HepG2 (cell line): ENCODE measurements at regions of chr7 and their contacts with region 1.

Region 1: DNA sequence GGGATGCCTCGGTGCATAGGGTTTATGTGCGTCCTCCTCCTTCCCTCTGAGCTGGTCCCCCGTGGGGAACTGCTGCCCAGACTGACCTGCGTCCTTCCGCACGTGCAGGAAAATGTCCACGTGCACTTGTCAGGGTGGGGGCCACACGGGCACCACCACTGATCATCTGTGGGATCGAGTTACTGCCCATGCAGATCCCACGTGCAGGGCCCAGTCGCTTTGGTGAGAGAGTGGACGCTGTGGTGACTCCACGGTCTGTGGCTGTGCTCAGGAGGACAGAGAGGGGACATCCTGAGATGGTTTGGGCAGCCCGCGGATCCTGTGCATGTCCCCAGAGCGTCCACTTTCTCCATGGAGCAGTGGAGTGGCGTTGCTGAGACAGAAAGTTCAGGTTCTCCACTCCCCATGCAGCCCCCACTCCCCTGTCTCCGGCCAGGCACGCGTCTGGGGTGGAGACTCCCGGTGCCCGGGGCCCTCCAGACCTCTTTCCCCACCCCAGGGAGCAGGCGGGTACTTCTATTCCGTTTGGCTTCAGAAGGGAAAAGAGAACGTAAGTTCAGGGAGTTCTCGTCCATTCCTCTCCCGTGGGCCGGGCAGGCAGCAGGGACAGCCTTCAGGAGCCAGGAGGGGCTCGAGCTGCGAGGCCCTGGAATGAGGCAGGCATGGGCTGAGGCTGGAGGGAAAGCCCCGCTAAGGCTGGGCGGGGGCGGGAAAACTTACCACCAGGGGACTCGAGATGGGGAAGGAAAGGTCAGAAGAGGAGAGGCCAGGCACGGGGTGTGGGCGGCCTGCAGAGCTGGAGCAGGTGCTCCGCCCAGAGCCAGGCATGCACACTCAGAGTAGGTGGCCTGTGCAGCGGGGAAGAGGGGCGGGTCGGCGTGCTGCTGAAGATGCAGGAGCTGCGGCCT is 59.9 kb downstream of the EGFR start:
- DNase-seq: peak; percentile 77
- ATAC-seq: peak; percentile 91
- H3K4me3 ChIP-seq: peak overlapping the region; percentile 53 to 77 (median 56)
- H3K27ac ChIP-seq: peak overlapping the region; percentile 94
- H3K4me1 ChIP-seq: peaks cover 89% of the 10 kb centered on the region
- H3K27me3 ChIP-seq: no peaks in the 10 kb centered on the region
- CTCF ChIP-seq: peak; percentile 74
- EP300 ChIP-seq: peak in 1 of 2 experiments; percentile 47; a peak in 2 of 4 replicates
- POLR2A ChIP-seq: peak; percentile 27 to 48; a peak in 2 of 4 replicates
- RAD21 ChIP-seq: no peak

Region 2: DNA sequence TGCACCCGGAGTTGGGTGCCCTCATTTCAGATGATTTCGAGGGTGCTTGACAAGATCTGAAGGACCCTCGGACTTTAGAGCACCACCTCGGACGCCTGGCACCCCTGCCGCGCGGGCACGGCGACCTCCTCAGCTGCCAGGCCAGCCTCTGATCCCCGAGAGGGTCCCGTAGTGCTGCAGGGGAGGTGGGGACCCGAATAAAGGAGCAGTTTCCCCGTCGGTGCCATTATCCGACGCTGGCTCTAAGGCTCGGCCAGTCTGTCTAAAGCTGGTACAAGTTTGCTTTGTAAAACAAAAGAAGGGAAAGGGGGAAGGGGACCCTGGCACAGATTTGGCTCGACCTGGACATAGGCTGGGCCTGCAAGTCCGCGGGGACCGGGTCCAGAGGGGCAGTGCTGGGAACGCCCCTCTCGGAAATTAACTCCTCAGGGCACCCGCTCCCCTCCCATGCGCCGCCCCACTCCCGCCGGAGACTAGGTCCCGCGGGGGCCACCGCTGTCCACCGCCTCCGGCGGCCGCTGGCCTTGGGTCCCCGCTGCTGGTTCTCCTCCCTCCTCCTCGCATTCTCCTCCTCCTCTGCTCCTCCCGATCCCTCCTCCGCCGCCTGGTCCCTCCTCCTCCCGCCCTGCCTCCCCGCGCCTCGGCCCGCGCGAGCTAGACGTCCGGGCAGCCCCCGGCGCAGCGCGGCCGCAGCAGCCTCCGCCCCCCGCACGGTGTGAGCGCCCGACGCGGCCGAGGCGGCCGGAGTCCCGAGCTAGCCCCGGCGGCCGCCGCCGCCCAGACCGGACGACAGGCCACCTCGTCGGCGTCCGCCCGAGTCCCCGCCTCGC is 60.1 kb before region 1 on chr7 and contains the start of gene EGFR:
- CTCF ChIA-PET with region 1: no interaction called
- POLR2A ChIA-PET with region 1: interaction called, 5 read pairs
- in situ Hi-C with region 1: no loop called
- intact Hi-C with region 1: loop called (anchors 2 kb)
- DNase-seq: no peak
- ATAC-seq: peak; percentile 78
- H3K4me3 ChIP-seq: peak within 1 kb of the TSS; percentile 63 to 74 (median 64)
- H3K27ac ChIP-seq: no peak within 1 kb of the TSS
- H3K4me1 ChIP-seq: peaks cover 53% of the 10 kb centered on the region
- H3K27me3 ChIP-seq: peaks cover 7 to 32% of the 10 kb centered on the region in 2 experiments
- CTCF ChIP-seq: no peak; the same call in 1 of the 2 replicates
- EP300 ChIP-seq: no peak
- POLR2A ChIP-seq: no peak
- RAD21 ChIP-seq: 0 out of 2 replicates have a peak, but pooled peaks have one; percentile 22
- total RNA-seq, gene EGFR: 7.0 TPM in 2 replicates

Region 3: DNA sequence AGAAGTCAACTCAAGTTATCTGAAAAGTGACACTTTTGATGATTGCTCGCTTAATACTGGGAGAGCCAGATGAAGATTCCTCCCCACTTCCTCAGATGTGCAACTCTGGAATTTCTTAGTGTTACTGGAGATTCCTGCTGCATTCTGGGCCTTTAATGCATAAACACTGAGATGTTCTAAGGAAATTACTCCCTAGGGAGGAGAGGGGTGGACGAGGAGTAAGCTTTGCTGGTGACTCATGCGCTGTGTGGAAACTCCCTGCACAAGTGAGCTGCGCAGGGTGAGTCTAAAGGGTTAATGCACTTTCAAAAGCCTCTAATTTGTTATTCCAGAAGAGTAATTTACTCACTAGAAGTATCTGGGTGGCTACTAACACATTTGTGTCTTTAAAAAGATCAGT is 13.6 kb before region 1 on chr7:
- CTCF ChIA-PET with region 1: no interaction called
- POLR2A ChIA-PET with region 1: interaction called, 35 read pairs
- in situ Hi-C with region 1: no loop called
- intact Hi-C with region 1: loop called (anchors 1 kb)
- DNase-seq: no peak
- ATAC-seq: no peak
- H3K4me3 ChIP-seq: no peak overlapping the region
- H3K27ac ChIP-seq: peak overlapping the region; percentile 69
- H3K4me1 ChIP-seq: peaks cover 60% of the 10 kb centered on the region
- H3K27me3 ChIP-seq: no peaks in the 10 kb centered on the region
- CTCF ChIP-seq: no peak
- EP300 ChIP-seq: no peak
- POLR2A ChIP-seq: no peak
- RAD21 ChIP-seq: no peak

Region 4: DNA sequence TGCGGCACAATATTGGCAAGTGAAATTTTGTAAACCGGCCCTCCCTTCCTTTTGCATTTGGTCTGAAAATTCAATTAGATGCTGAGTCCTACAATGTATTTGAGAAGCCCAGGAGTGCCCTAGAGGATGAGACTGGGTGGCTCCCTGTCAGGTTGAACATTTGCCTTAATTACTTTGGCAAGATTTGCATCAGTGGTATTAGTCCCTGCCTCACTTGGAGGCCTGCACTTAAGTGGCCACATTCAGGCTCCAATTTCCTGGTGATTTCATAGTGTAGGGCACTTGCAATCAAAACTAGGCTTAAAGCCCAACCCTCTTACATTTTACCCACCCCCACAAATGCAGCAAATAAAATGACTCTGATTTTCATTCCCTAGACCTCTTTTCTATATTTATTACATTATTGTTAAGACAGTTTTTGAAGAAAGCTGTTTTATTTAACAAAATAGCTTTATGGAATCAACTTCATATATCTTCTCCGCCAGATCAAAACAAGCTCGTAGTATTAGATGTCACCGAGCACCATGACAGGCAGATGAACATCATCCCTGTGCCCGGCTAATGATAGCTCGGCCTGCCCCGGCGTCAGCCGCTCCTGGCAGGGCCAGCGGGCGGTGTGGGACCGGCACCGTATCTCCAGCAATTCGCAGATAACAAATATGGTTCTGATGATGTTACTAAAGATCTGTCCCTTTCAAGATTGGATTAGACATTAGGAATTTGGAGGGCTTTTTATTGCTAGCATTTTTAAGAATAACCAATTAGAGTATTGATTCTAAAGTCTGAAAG is 13.7 kb after region 1 on chr7:
- CTCF ChIA-PET with region 1: no interaction called
- POLR2A ChIA-PET with region 1: interaction called, 46 read pairs
- in situ Hi-C with region 1: no loop called
- intact Hi-C with region 1: no loop called
- DNase-seq: no peak
- ATAC-seq: no peak
- H3K4me3 ChIP-seq: no peak overlapping the region
- H3K27ac ChIP-seq: peak overlapping the region; percentile 58
- H3K4me1 ChIP-seq: peaks cover 54% of the 10 kb centered on the region
- H3K27me3 ChIP-seq: 0 out of 5 replicates have a peak, but pooled peaks cover 0 to 2% of the 10 kb centered on the region in 2 experiments
- CTCF ChIP-seq: no peak
- EP300 ChIP-seq: no peak
- POLR2A ChIP-seq: no peak
- RAD21 ChIP-seq: no peak

Region 5: GRCh38 chr7:55158541-55159382 is 80.0 kb after region 1 on chr7:
- CTCF ChIA-PET with region 1: no interaction called
- POLR2A ChIA-PET with region 1: no interaction called
- in situ Hi-C with region 1: no loop called
- intact Hi-C with region 1: no loop called
- DNase-seq: no peak
- ATAC-seq: no peak
- H3K4me3 ChIP-seq: no peak overlapping the region
- H3K27ac ChIP-seq: no peak overlapping the region
- H3K4me1 ChIP-seq: no peaks in the 10 kb centered on the region
- H3K27me3 ChIP-seq: no peaks in the 10 kb centered on the region
- CTCF ChIP-seq: no peak
- EP300 ChIP-seq: no peak
- POLR2A ChIP-seq: no peak
- RAD21 ChIP-seq: no peak

Region 6: GRCh38 chr7:55185941-55186609 is 107.4 kb after region 1 on chr7:
- CTCF ChIA-PET with region 1: no interaction called
- POLR2A ChIA-PET with region 1: interaction called, 21 read pairs
- in situ Hi-C with region 1: no loop called
- intact Hi-C with region 1: no loop called
- DNase-seq: peak; percentile 78
- ATAC-seq: peak; percentile 75
- H3K4me3 ChIP-seq: peak overlapping the region in 1 of 3 experiments; percentile 70; a peak in 2 of 6 replicates
- H3K27ac ChIP-seq: peak overlapping the region; percentile 99
- H3K4me1 ChIP-seq: peaks cover 96% of the 10 kb centered on the region
- H3K27me3 ChIP-seq: no peaks in the 10 kb centered on the region
- CTCF ChIP-seq: no peak
- EP300 ChIP-seq: peak in 1 of 2 experiments; percentile 62; a peak in 2 of 4 replicates
- POLR2A ChIP-seq: no peak
- RAD21 ChIP-seq: peak; percentile 21; the same call in 1 of the 2 replicates

Region 7: DNA sequence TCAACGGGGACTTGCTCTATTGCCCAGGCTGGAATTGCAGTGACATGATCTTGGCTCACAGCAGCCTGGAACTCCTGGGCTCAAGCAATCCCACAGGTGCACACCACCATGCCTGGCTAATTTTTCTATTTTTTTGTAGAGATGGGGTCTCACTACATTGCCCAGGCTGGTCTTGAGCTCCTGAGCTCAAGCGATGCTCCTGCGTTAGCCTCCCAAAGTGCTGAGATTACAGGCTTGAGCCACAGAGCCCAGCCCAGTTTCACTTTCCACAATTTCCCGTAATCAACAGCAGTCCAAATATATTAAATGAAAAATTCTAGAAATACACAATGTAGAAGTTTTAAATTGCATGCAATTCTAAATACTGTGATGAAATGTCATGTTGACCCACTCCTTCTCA is 759.9 kb after region 1 on chr7:
- CTCF ChIA-PET with region 1: no interaction called
- POLR2A ChIA-PET with region 1: no interaction called
- in situ Hi-C with region 1: no loop called
- intact Hi-C with region 1: no loop called
- DNase-seq: no peak
- ATAC-seq: no peak
- H3K4me3 ChIP-seq: no peak overlapping the region
- H3K27ac ChIP-seq: no peak overlapping the region
- H3K4me1 ChIP-seq: no peaks in the 10 kb centered on the region
- H3K27me3 ChIP-seq: no peaks in the 10 kb centered on the region
- CTCF ChIP-seq: no peak
- EP300 ChIP-seq: no peak
- POLR2A ChIP-seq: no peak
- RAD21 ChIP-seq: no peak